ENCODE measurements at regions of chr12 and their contacts with region 1.

Region 1: DNA sequence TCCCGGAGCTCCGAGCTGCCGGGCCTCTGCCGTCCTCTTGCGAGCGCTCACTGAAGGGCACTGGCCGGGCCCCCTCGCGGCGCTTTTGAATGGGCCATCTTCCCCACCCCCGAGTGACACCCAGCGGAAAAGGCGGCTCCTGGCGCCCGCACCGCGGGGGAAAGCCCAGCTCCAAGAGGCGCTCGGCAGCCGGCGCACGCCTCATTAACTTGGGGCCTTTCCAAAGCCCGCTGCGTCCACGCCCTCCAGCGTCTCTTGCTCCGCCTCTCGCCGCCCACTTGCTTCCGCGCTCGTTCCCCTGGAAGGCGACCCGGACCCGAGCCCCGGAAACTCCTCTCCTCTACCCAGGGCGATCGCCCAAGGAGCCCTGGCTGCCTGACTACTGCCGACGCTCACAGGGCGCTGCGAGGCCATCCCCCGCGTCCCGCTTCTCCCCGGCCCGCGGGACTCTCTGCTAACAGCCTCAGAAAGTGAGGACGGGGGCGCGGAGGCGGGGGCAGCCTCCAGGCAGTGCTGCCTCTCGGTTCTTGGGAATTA is at the start of gene PHLDA1:
- DNase-seq: peak; percentile 69 to 97
- H3K4me3 ChIP-seq: peak within 1 kb of the TSS; percentile 58 to 80
- H3K27ac ChIP-seq: peak within 1 kb of the TSS; percentile 95
- H3K4me1 ChIP-seq: no peaks in the 10 kb centered on the region
- H3K27me3 ChIP-seq: no peaks in the 10 kb centered on the region
- CTCF ChIP-seq: peak; percentile 64 to 74 (median 69)
- total RNA-seq, gene PHLDA1: 11.8 TPM

Region 2: DNA sequence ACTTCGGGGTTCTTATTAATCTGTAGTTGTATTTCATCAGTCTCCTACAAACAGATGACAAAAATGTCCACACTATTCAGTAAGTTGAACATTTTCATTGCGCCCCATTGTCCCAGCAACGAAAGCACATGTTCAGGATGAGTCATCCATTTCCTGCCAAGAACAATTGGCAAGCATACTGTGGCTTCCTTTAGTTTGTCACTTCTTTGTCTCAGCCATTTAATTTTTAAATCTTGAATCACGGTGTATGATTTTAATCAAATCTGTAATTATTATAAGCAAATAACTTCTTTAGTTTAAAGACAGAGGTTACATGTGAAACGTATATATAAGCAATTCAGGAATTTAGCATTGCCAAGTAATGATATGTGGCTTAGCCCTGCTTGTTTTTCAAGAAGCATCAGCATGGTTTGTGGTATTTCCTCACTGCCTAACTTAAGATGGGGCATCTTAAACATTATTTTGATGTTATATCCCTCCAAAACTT is 308.8 kb before region 1 on chr12:
- intact Hi-C with region 1: loop called (anchors 5 kb)
- DNase-seq: peak in 1 of 2 donors; percentile 74
- H3K4me3 ChIP-seq: no peak overlapping the region
- H3K27ac ChIP-seq: no peak overlapping the region
- H3K4me1 ChIP-seq: peaks cover 4% of the 10 kb centered on the region in 2 donors
- H3K27me3 ChIP-seq: no peaks in the 10 kb centered on the region
- CTCF ChIP-seq: no peak

Region 3: GRCh38 chr12:75820848-75821578 is 210.6 kb before region 1 on chr12:
- intact Hi-C with region 1: loop called (anchors 2 kb)
- DNase-seq: peak in 1 of 2 donors; percentile 83
- H3K4me3 ChIP-seq: no peak overlapping the region
- H3K27ac ChIP-seq: peak overlapping the region; percentile 42 to 50
- H3K4me1 ChIP-seq: no peaks in the 10 kb centered on the region
- H3K27me3 ChIP-seq: no peaks in the 10 kb centered on the region
- CTCF ChIP-seq: no peak

Region 4: DNA sequence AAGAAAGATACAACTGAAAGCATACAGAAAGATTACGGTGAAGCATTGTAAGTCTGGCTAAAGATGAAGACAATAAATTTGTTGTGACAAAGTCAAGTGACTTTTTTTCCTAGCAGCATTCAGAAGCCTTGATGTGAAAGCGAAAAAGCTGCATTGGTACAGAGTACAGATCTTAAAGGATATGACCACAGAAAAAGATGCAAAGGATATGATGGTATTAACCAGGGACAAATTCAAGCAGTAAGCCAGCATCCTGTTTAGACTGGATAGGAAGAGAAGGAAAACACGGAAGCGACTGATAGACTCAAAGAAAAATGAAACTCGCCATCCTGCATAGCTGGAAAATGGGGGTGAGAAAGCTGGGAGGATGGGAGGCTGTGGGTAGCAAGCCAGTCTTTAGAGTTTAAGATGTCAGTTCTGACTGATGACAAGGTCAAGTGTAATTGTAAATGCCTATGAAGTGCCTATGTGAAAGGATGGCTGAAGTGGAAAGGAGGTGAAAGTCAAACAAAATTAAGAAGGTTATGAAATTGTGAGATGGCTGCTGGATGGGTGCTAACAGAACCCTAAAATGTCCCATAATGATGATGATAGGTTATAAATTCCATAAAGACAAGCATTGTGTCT is 92.5 kb before region 1 on chr12:
- intact Hi-C with region 1: loop called (anchors 5 kb)
- DNase-seq: no peak
- H3K4me3 ChIP-seq: no peak overlapping the region
- H3K27ac ChIP-seq: no peak overlapping the region
- H3K4me1 ChIP-seq: peaks cover 3 to 7% of the 10 kb centered on the region in 2 donors
- H3K27me3 ChIP-seq: no peaks in the 10 kb centered on the region
- CTCF ChIP-seq: no peak

Region 5: GRCh38 chr12:75977952-75978671 is 53.5 kb before region 1 on chr12:
- intact Hi-C with region 1: loop called (anchors 1 kb)
- DNase-seq: peak; percentile 59 to 93
- H3K4me3 ChIP-seq: no peak overlapping the region
- H3K27ac ChIP-seq: peak overlapping the region; percentile 86 to 91
- H3K4me1 ChIP-seq: peaks cover 13 to 27% of the 10 kb centered on the region in 2 donors
- H3K27me3 ChIP-seq: no peaks in the 10 kb centered on the region
- CTCF ChIP-seq: no peak

Region 6: DNA sequence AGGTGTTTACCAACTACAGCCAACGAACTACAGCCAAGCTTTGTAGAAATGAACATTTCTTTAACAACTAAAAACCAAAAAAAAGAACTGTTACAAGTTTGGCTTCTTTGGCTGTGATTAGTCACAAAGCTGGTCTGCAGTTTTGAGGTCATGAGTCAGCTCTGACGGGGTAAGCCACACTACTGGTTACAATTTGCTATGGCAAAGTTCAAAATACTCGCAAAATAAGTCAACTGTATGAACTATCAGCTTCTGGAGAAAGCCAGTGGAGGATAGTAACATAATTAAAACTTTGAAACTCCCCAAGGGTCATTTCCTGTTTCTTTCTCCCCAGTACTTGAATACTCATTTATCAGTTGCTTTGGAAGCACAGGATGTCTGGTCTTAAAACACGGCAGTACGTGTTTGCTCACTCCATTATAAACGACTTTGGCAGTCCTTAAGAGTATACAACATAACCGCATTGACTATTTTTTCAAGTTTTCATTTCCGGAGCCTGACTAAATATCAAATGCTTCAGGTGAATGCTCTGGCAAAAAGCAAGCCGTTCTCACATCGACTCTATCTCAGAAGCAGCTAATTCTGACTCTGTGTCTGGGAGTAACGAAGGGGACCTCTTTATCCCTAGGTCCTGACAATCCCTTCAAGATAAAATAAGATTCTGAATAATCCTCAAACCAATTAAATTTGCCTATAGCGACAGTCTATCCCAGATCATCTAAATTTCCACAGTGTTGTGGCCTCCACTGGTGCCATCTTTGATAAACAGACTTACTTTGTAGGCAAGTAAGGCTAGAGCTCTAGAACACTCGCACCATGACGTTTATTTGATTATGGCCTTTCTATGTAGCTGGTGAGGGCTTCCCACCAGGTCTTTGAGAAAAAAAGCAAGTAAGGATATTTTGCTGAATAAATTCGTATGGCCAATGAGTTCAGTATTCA is 10.6 kb before region 1 on chr12:
- intact Hi-C with region 1: no loop called
- DNase-seq: no peak
- H3K4me3 ChIP-seq: no peak overlapping the region
- H3K27ac ChIP-seq: peak overlapping the region in 1 of 2 donors; percentile 9
- H3K4me1 ChIP-seq: peaks cover 0 to 2% of the 10 kb centered on the region in 2 donors
- H3K27me3 ChIP-seq: no peaks in the 10 kb centered on the region
- CTCF ChIP-seq: no peak

Measured in ascending aorta (tissue), 2 donors.